ENCODE measurements at regions of chr3 and their contacts with region 1.

Region 1: DNA sequence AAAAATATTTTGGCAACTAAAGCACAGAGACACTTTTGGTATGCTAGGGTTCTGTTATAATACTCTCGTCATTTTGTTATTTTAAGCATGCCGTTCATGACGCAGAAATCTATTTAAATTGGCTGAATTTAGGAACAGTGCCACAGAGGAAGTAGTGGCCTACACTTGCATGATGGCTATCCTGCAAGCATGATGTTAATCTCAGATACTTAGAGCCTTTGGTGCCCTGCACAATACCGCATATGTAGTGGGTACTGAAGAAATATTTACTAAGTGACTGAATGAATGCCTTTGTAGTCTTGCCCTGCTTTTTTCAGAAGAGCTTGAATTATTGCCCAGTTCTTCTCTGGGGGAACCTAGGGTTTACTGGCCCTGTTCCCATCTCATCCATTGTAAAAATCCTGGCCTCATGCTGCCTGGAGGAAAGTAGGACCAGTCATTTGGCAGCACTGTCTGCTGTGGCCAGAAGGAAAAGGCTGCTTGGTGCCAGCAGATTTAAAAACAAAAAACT is 79.0 kb downstream of the SERPINI1 start:
- DNase-seq: peak in 7 of 10 donors; percentile 40 to 90 (median 54)

Region 2: GRCh38 chr3:167734498-167735232 is 79.8 kb before region 1 on chr3 and contains the start of gene PDCD10:
- intact Hi-C with region 1: loop called (anchors 5 kb)
- DNase-seq: peak; percentile 96 to 100 (median 99)

Measured in posterior cingulate gyrus (tissue), 11 donors.